ENCODE measurements at regions of chr16 and their contacts with region 1.

Region 1: GRCh38 chr16:65671-66137 is 6.7 kb downstream of the RHBDF1 start:
- DNase-seq: no peak
- H3K4me3 ChIP-seq: no peak overlapping the region
- CTCF ChIP-seq: peak; percentile 96

Region 2: DNA sequence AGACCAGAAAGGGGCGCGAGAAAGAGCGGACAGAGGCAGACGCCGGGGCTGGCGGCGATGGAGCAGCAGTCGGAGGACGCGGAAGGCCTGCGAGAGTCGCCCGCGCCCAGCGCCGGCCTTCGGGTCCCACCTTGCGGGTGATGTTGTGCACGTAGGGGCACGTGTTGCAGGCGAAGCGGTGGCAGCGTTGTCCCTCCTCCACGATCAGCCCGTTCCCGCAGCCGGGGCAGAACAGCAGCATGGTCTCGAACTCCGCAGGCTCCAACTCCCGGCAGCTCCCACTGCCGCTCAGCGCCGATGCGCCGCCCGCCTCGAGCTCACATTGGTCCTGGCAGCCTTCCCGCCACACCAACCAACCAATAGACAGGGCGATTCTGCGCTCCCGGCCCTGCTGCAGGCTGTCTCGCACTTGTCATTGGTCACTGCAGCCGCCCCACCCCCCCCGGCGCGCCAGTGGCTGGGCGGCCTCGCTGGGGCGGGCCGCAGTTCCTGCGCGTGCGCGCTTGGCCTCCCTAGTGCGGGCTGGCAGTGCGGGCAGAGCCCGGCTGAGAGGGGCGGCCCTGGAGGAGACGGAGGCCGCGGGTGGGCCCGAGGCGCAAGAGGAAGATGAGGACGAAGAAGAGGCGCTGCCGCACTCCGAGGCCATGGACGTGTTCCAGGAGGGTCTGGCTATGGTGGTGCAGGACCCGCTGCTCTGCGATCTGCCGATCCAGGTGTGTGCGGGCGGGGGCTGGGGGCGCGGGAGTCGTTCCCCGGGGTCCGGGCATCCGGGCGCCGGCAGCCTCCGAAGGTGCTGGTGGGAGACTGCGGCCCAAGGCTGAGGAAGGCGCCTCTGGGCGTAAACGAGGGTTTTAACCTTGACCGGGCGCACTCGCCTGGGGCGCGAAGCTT is 12.1 kb before region 1 on chr16 and contains the starts of genes POLR3K and SNRNP25:
- CTCF ChIA-PET with region 1: interaction called, 37 read pairs
- POLR2A ChIA-PET with region 1: interaction called, 4 read pairs
- DNase-seq: peak; percentile 79
- H3K4me3 ChIP-seq: peak within 1 kb of the TSS; percentile 93
- CTCF ChIP-seq: no peak

Region 3: DNA sequence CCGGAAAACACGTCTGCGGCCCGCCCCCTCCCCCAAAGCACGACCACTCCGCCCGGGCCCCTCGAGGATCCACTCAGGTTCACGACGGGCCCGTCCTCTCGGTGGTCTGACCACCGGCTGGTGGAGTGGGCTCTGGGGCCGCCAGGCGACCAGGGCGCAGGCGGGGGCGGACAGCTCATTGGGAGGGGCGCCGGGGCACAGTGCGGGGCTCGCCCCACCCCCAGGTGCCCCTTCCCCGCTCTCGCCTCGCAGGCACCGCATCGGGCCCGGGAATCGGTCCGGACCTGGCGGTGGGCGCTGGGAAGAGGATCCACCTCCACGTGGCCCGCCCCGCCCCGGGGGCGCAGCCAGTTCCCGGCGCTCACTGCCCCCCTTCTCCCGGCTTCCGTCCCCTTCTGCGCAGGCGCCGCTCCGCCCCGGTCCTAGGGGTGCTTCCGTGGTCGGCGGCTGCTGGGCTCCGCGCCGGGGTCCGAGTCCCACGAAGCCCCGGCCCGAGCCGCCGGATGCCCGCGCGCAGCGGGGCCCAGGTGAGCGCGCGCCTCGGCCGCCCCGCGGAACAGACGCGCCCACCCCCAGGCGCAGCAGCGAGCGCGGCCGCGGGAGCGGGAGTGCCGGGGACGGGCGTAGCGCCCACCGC is 12.2 kb after region 1 on chr16 and contains the start of gene MPG:
- CTCF ChIA-PET with region 1: interaction called, 728 read pairs
- POLR2A ChIA-PET with region 1: no interaction called
- DNase-seq: no peak
- H3K4me3 ChIP-seq: peak within 1 kb of the TSS; percentile 74
- CTCF ChIP-seq: no peak

Region 4: DNA sequence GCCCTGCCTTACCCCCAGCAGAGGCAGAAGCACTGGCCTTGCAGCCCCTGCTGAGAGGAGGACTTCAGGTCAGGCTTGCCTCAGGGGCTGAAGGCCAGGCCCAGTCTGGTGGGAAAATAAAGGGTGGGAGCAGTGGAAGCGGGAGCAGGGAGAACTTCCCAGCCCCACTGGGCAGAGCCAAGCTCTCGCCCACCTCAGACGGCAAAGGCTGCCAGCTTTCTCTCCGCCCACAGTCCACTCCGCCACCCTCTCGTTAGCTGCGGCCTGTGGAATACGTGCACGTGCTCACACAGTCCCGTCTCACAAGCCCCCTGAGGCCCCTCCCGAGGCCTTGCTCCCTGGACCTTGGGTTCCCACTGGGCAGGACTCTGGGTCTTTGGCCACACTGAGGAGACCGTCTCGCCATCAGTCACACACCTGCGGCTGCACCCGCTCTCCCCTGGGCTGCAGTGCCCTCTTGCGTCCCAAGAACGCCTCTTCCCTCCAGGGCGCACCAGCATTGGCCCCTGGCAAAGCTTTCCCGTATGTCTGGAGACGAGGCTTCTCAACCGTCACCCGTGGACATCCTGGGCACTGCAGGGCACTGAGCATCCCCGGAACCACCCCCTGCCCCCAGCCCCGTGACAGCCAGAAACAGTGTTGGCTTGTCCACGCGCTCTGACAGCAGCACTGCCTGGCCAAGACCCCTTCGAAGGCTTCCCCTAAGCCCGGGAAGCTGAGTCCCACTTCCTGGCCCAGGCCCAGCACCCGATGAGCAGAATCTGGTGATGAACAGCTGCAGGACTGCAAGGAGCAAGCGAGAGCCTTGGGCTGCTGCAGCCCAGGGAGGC is 296.4 kb after region 1 on chr16:
- CTCF ChIA-PET with region 1: interaction called, 18 read pairs
- POLR2A ChIA-PET with region 1: no interaction called
- DNase-seq: no peak
- H3K4me3 ChIP-seq: no peak overlapping the region
- CTCF ChIP-seq: peak; percentile 88

Measured in AG04449 (cell line).